AG04450 (cell line): ENCODE measurements at regions of chr9 and their contacts with region 1.

Region 1: DNA sequence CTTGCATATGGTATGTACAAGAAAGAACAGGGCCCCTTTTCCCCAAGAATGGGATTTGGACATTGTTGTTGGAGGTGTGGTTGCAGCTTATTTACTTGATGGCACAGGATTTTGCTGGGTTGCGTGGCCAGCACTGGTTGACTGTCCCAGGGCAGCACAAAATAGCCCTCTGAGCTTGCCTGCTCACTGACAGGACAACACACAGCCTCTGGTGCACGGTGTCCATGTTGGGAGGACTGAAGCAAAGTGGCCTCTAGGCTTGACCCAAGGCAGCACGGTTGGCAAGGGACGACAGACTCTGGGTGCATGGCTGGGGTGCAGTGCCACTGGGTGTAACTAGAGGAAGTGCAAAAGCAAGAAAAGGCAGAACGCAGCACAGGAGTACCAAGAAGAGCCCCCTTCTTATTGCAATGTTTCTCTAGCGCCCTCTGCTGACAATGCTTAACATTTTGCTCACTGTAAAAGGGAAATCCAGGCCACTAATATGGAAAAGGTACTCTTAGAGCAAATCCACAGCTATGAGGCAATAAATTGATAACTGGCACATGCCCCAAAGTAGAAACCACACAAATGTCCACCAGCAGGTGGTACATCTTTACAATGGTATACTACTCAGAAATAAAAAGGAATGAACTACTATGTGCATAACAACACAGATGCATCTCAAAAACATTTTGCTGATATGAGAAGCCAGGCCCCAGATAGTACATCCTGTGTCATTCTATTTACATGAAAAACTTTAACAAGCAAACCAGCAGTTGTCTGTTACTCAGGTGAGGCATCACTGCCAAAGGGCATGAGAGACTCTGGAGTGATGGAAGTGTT is 47.4 kb upstream of the BARX1 start:
- DNase-seq: peak; percentile 11
- H3K4me3 ChIP-seq: no peak overlapping the region
- H3K27ac ChIP-seq: no peak overlapping the region
- H3K27me3 ChIP-seq: no peaks in the 10 kb centered on the region
- CTCF ChIP-seq: peak; percentile 68

Region 2: DNA sequence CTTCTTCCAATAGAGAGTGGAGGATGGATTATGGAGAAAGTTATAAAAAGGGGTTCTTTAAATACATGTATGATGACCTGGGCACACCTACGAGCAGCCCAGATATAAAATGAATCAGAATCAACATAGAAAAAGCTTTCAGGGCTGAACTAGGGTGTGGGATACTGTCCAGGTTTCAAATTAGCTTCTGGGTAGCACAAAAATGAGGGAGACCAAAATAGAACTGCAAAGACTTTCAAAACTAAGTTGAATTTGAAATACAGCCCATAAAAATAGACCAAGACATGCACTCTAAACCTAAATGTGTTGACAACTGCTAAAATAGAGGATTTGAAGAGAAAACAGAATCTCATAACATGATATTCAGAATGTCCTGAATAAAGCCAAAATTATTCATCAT is 1141.7 kb before region 1 on chr9:
- CTCF ChIA-PET with region 1: no interaction called
- POLR2A ChIA-PET with region 1: no interaction called
- DNase-seq: no peak
- H3K4me3 ChIP-seq: no peak overlapping the region
- H3K27ac ChIP-seq: no peak overlapping the region
- H3K27me3 ChIP-seq: no peaks in the 10 kb centered on the region
- CTCF ChIP-seq: no peak

Region 3: DNA sequence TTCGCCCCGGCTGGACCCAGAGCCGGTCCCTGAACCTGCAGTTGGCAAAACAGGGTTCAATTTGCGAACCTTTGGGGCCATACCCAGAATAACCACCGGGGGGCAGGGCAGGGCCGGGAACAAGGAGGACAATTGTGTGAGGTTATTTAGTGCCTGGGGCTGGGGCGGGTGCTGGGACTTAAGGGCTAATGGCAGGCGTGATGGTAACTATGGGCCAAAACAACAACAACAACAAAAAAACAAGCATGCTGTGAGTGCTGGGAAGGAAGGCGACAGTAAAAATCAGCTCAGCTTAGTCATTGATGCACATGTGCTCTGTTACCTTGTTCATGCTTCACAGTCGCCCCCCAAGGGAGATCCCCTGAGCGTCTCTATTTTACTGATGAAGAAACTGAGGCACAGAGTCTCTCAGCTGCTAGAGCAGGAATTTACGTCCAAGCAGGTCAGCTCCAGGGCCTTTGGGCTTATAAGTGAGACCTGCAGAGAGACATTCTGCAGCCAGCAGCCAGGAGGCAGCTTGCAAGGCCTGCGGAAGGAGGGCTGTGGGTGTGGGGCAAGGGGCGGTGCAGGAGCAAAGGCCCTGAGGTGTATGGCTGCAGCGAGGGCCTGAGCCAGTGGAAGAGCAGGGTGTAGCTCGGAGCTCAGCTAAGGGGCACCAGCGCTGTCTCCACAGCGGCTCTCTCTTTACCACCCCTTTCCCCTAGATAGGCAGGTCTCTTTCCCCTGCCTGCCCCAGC is 320.1 kb before region 1 on chr9:
- CTCF ChIA-PET with region 1: interaction called, 65 read pairs
- POLR2A ChIA-PET with region 1: no interaction called
- DNase-seq: no peak
- H3K4me3 ChIP-seq: no peak overlapping the region
- H3K27ac ChIP-seq: no peak overlapping the region
- H3K27me3 ChIP-seq: no peaks in the 10 kb centered on the region
- CTCF ChIP-seq: peak; percentile 84